Naive thymus-derived CD4-positive, alpha-beta T cell (primary cell): ENCODE measurements at regions of chr4 and their contacts with region 1.

Region 1: GRCh38 chr4:76993787-76994641 is 44.5 kb downstream of the SEPTIN11 start:
- DNase-seq: peak in 8 of 9 donors; percentile 42 to 90 (median 86)
- ATAC-seq: peak; percentile 82
- H3K4me3 ChIP-seq: peak overlapping the region; percentile 52
- H3K4me3 Mint-ChIP-seq: peak overlapping the region; percentile 56 to 94 (median 79)
- H3K27ac ChIP-seq: peak overlapping the region; percentile 19
- H3K27ac Mint-ChIP-seq: peak overlapping the region; percentile 73 to 97 (median 84)
- H3K4me1 ChIP-seq: peaks cover 28 to 50% of the 10 kb centered on the region in 2 donors
- H3K4me1 Mint-ChIP-seq: peaks cover 39 to 84% (median 59%) of the 10 kb centered on the region in 7 donors
- H3K27me3 ChIP-seq: no peaks in the 10 kb centered on the region
- H3K27me3 Mint-ChIP-seq: peaks cover 0 to 27% (median 0%) of the 10 kb centered on the region in 5 donors

Region 2: DNA sequence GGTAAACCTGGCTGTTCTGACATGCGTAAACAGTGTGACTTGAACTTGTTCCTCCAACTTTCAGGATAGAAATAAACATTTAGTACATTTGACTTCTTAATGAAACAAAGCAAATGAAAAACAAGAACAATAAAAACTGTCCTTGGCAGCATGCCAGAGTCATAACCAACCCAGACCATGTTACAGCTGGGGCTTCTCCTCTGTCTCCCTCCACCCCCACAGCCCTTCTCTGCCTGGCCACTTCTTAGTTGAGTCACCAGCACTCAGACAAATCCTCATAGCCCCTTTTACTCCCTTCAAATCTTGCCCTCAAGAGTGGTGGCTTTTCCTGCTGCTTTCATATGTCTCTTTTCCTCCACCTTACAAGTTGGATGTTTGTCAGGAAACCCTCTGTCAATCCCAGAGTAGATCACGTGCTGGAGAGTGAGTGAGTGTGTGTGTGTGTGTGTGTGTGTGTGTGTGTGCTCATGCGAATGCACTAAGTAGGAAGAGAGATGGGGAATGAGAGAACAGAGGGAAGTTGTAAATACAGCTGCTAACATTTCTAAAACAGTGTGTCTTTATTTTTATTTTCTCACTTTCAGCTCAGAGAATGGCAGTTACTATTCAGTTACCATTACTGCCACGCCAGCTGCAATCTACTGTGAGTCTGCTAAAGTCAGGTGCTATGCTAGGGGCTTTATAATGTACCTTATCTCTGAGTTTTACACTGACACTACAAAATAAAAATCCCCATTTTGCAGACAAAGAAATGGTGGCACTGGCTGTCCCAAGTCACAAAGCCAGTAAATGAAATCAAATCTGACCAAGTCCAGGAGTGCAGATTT is 795.4 kb before region 1 on chr4:
- CTCF ChIA-PET with region 1: no interaction called
- POLR2A ChIA-PET with region 1: no interaction called
- intact Hi-C with region 1: no loop called
- DNase-seq: peak in 3 of 9 donors; percentile 7 to 18 (median 11)
- ATAC-seq: peak; percentile 67
- H3K4me3 ChIP-seq: no peak overlapping the region
- H3K4me3 Mint-ChIP-seq: peak overlapping the region in 8 of 10 donors; percentile 1 to 60 (median 47)
- H3K27ac ChIP-seq: no peak overlapping the region
- H3K27ac Mint-ChIP-seq: peak overlapping the region in 8 of 9 donors; percentile 12 to 81 (median 40)
- H3K4me1 ChIP-seq: peaks cover 0 to 19% of the 10 kb centered on the region in 2 donors
- H3K4me1 Mint-ChIP-seq: peaks cover 25 to 69% (median 55%) of the 10 kb centered on the region in 7 donors
- H3K27me3 ChIP-seq: no peaks in the 10 kb centered on the region
- H3K27me3 Mint-ChIP-seq: no peaks in the 10 kb centered on the region

Region 3: DNA sequence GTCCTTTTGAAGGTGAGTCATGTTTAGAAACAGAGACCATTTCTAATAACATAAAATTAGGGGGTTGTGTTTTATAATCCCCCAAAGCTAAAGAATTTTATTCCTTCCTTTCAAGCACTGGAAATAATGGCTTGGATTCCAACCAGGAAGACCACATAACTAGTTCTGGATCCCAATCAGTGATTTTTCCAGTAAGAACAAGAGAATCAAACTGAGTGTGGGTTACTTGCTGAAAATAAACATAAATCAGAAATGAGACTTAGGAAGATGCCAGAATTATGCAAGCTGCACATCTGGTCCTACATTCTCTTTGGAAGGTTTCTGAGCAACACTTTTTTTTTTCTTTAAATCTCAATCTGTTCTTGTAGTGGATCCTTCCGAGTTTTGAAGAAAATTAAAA is 172.4 kb before region 1 on chr4:
- CTCF ChIA-PET with region 1: no interaction called
- POLR2A ChIA-PET with region 1: no interaction called
- intact Hi-C with region 1: no loop called
- DNase-seq: no peak
- ATAC-seq: no peak
- H3K4me3 ChIP-seq: no peak overlapping the region
- H3K4me3 Mint-ChIP-seq: no peak overlapping the region
- H3K27ac ChIP-seq: no peak overlapping the region
- H3K27ac Mint-ChIP-seq: no peak overlapping the region
- H3K4me1 ChIP-seq: no peaks in the 10 kb centered on the region
- H3K4me1 Mint-ChIP-seq: no peaks in the 10 kb centered on the region
- H3K27me3 ChIP-seq: no peaks in the 10 kb centered on the region
- H3K27me3 Mint-ChIP-seq: peaks cover 17 to 21% (median 19%) of the 10 kb centered on the region in 5 donors

Region 4: DNA sequence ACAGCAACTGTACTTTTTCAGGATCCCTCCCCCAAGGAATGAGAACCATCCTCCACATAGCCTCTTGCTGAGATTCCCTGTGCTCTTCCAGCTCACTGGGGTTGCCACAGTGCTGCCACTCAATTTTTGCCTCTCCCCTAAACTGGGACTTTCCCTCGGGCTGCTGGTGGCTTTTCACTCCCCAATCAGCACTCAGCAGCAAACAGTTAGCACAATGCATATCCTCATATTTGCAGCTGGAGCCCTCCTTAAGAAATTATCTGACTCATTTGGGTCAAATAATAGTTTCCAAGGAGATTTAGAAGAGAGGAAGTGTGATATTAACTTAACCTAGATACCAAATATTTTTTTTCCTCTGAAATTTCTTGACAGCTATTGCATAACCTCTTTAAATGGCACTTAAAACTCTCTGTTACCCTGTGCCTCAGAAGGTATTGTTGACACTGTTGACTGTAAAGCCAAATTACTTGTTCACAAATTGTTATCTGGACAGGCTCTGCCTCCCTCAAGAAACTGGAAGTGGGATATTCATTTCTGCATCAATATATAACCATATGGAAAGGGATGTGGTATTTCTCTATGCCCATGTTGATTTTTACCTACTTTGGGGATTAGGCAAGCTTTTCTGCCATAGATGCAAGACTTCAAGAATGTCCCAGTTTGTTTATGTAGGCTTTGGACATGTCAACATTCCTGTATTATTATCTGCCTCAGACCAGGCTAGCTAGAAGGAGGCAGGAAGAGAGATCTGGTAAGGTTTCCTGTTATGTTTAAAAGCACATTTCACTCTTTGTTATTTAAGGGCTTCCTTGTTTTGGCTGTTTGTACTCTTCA is 13.6 kb after region 1 on chr4:
- CTCF ChIA-PET with region 1: interaction called, 5 read pairs
- POLR2A ChIA-PET with region 1: interaction called, 62 read pairs
- intact Hi-C with region 1: loop called in 1 of 2 experiments (anchors 1 kb)
- DNase-seq: peak in 1 of 9 donors; percentile 22
- ATAC-seq: peak; percentile 90
- H3K4me3 ChIP-seq: peak overlapping the region; percentile 4
- H3K4me3 Mint-ChIP-seq: peak overlapping the region; percentile 23 to 84 (median 74)
- H3K27ac ChIP-seq: peak overlapping the region; percentile 44
- H3K27ac Mint-ChIP-seq: peak overlapping the region; percentile 66 to 93 (median 88)
- H3K4me1 ChIP-seq: peaks cover 15 to 41% of the 10 kb centered on the region in 2 donors
- H3K4me1 Mint-ChIP-seq: peaks cover 39 to 83% (median 69%) of the 10 kb centered on the region in 7 donors
- H3K27me3 ChIP-seq: no peaks in the 10 kb centered on the region
- H3K27me3 Mint-ChIP-seq: peaks cover 0 to 5% (median 0%) of the 10 kb centered on the region in 5 donors

Region 5: GRCh38 chr4:77015390-77015789 is 21.4 kb after region 1 on chr4:
- CTCF ChIA-PET with region 1: interaction called, 5 read pairs
- POLR2A ChIA-PET with region 1: interaction called, 62 read pairs
- intact Hi-C with region 1: loop called in 1 of 2 experiments (anchors 2 kb)
- DNase-seq: no peak
- ATAC-seq: peak; percentile 24
- H3K4me3 ChIP-seq: no peak overlapping the region
- H3K4me3 Mint-ChIP-seq: peak overlapping the region in 5 of 10 donors; percentile 6 to 65 (median 37)
- H3K27ac ChIP-seq: no peak overlapping the region
- H3K27ac Mint-ChIP-seq: peak overlapping the region in 6 of 9 donors; percentile 52 to 76 (median 68)
- H3K4me1 ChIP-seq: peaks cover 0 to 30% of the 10 kb centered on the region in 2 donors
- H3K4me1 Mint-ChIP-seq: peaks cover 12 to 58% (median 49%) of the 10 kb centered on the region in 7 donors
- H3K27me3 ChIP-seq: no peaks in the 10 kb centered on the region
- H3K27me3 Mint-ChIP-seq: peaks cover 0 to 4% (median 0%) of the 10 kb centered on the region in 5 donors

Region 6: GRCh38 chr4:77025643-77026321 is 31.8 kb after region 1 on chr4:
- CTCF ChIA-PET with region 1: no interaction called
- POLR2A ChIA-PET with region 1: interaction called, 3 read pairs
- intact Hi-C with region 1: loop called in 1 of 2 experiments (anchors 2 kb)
- DNase-seq: peak in 1 of 9 donors; percentile 30
- ATAC-seq: no peak
- H3K4me3 ChIP-seq: no peak overlapping the region
- H3K4me3 Mint-ChIP-seq: peak overlapping the region in 1 of 10 donors; percentile 54
- H3K27ac ChIP-seq: no peak overlapping the region
- H3K27ac Mint-ChIP-seq: peak overlapping the region in 1 of 9 donors; percentile 40
- H3K4me1 ChIP-seq: peaks cover 0 to 13% of the 10 kb centered on the region in 2 donors
- H3K4me1 Mint-ChIP-seq: peaks cover 13 to 36% (median 29%) of the 10 kb centered on the region in 7 donors
- H3K27me3 ChIP-seq: no peaks in the 10 kb centered on the region
- H3K27me3 Mint-ChIP-seq: peaks cover 0 to 3% (median 0%) of the 10 kb centered on the region in 5 donors

Region 7: DNA sequence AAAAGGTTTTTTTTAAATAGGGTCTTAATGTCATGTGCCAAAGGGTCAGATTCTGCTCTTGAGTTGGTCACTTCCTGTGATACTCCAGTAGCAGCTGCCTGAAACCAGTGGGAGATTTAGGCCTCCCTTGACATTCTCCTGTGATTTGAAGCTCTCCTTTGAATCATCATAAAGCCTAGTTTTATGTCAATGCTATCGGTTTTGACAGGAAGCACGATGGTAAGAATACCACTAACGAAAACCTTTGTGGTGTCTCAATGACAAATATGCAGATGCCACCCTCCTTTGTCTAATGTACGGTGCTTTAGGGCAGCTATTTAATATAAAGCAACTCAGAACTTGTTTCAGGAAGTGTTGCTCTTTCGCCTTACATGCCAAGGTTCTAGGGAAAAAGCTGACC is 37.5 kb after region 1 on chr4:
- CTCF ChIA-PET with region 1: interaction called, 3 read pairs
- POLR2A ChIA-PET with region 1: interaction called, 4 read pairs
- intact Hi-C with region 1: loop called (anchors 1 to 2 kb)
- DNase-seq: peak in 3 of 9 donors; percentile 31 to 47 (median 31)
- ATAC-seq: peak; percentile 82
- H3K4me3 ChIP-seq: no peak overlapping the region
- H3K4me3 Mint-ChIP-seq: peak overlapping the region in 5 of 10 donors; percentile 9 to 50 (median 10)
- H3K27ac ChIP-seq: no peak overlapping the region
- H3K27ac Mint-ChIP-seq: peak overlapping the region in 5 of 9 donors; percentile 23 to 76 (median 41)
- H3K4me1 ChIP-seq: peaks cover 16 to 31% of the 10 kb centered on the region in 2 donors
- H3K4me1 Mint-ChIP-seq: peaks cover 24 to 50% (median 45%) of the 10 kb centered on the region in 7 donors
- H3K27me3 ChIP-seq: no peaks in the 10 kb centered on the region
- H3K27me3 Mint-ChIP-seq: no peaks in the 10 kb centered on the region